ENCODE measurements at regions of chr15 and their contacts with region 1.

Region 1: GRCh38 chr15:58770857-58771620 is at the start of gene MINDY2:
- DNase-seq: peak; percentile 100
- ATAC-seq: peak; percentile 99
- total RNA-seq, gene MINDY2: 38.2 TPM

Region 2: DNA sequence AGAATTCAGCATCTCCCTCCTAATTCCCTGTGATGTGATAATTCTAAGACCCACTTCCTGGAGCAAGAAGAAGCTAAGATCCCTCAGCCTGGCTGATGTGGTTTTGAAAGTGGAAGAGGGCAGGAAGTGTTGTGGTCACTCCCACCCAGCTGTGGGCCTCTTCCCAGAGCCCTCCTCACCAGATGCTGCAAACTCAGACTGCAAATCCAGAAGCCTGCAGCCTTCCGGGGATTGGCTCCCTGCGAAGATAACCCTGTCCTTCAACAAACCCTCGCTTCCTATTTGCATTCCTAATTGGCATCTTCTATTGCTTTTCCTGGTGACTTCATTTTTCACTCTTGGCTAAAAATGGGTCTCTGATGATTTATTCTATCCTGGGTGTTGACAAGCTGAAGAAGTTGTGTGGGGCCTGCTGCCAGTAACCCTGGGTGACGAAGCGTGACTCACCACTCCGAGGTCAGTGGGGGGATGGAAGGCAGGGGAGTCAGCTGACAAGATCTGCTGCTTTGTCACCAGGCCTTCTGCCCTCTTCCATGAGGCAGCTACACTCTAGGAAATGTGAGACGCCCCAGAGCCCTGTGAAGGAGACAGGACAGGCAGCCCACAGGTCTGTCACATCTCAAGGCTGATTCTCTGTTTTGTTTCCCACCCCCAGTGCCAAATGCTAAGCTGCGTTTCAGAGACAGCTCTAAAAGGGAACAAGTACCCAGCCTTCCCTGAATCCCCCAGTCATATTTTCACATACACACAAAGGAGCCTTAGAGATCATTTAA is 438.9 kb before region 1 on chr15:
- intact Hi-C with region 1: loop called (anchors 10 kb)
- DNase-seq: peak; percentile 94
- ATAC-seq: peak; percentile 98

Region 3: GRCh38 chr15:58933281-58934113 is 162.5 kb after region 1 on chr15 and contains the start of gene SLTM:
- intact Hi-C with region 1: loop called (anchors 2 kb)
- DNase-seq: peak; percentile 98
- ATAC-seq: peak; percentile 98
- total RNA-seq, gene SLTM: 49.2 TPM

Region 4: GRCh38 chr15:59437817-59438562 is 667.0 kb after region 1 on chr15 and contains the start of gene FAM81A:
- intact Hi-C with region 1: loop called (anchors 5 kb)
- DNase-seq: peak; percentile 92
- ATAC-seq: peak; percentile 94
- total RNA-seq, gene FAM81A: 11.0 TPM